ENCODE measurements at regions of chr19 and their contacts with region 1.

Region 1: DNA sequence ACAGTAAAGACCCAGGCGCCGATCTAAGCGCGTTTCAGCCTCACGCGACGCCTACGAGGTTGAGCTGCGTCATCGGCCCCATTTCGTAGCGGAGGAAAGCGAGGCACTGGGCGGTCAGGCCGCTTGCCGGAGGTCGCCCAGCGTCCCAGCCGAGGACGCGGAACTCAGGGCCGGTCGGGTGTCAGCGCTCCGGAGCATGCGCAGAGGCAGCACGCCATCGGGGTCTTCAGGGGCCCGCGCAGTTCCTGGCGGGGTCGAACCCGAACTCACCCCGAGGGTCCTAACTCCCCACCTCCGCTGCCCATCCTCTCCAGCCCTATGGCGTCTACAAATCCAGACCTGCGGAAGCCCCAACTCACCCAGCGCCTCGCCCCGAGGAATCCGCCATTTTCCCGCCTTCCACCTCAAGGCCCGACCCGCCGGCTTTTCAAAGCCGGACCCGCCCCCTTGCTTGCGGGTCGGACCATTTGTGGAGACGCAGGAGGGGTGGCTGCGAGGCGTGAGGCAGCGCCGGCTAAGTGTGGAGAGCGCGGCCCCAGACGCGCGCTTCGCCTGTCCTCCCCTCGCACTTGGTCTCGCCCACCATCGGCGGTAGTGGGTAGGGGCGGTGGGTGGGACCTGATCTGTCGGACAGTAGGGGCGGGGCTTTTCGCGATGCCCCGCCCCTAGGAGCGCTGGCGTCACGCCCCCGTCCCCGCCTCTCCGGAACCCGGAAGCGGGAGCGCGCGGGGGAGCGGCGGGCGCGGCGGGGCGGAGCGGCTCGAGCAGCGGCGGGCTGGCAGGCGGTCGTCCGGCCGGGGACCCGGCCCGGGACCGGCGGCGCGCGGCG is at the starts of genes HAUS8 and MYO9B:
- DNase-seq: peak; percentile 95
- ATAC-seq: peak; percentile 74
- H3K4me3 ChIP-seq: peak within 1 kb of the TSS; percentile 98
- H3K27ac ChIP-seq: peak within 1 kb of the TSS; percentile 87
- H3K4me1 ChIP-seq: peaks cover 29% of the 10 kb centered on the region
- H3K27me3 ChIP-seq: no peaks in the 10 kb centered on the region
- CTCF ChIP-seq: no peak
- EP300 ChIP-seq: 0 out of 4 replicates have a peak, but pooled peaks of 1 of the 2 experiments have one; percentile 17
- POLR2A ChIP-seq: peak; percentile 85
- RAD21 ChIP-seq: no peak
- polyA plus RNA-seq, gene HAUS8: 24.2 to 35.7 TPM
- polyA plus RNA-seq, gene MYO9B: 5.4 to 11.1 TPM

Region 2: DNA sequence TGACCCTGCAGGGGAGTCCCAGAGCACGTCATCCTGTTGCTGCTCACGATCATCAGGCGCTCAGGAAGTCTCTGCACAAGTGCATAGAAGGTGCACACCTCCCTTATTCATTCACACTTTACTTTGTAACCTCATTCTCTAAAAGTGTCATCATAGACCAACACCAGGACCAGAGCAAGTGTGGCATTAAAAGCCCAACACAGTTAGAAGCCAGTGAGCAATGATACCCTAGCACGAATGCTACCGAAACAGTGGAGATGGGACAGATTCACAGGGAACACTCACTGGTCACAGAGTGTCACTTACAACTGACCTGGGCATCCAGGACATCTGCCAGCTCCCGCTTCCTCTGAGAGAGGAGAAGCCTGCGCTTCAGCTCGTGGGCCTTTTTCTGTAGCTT is 17.0 kb before region 1 on chr19:
- CTCF ChIA-PET with region 1: no interaction called
- POLR2A ChIA-PET with region 1: no interaction called
- RAD21 ChIA-PET with region 1: no interaction called
- SMC1A ChIA-PET with region 1: no interaction called
- in situ Hi-C with region 1: no loop called
- intact Hi-C with region 1: no loop called
- DNase-seq: no peak
- ATAC-seq: no peak
- H3K4me3 ChIP-seq: no peak overlapping the region
- H3K27ac ChIP-seq: no peak overlapping the region
- H3K4me1 ChIP-seq: peaks cover 2% of the 10 kb centered on the region; the same call in 1 of the 2 replicates
- H3K27me3 ChIP-seq: no peaks in the 10 kb centered on the region
- CTCF ChIP-seq: no peak
- EP300 ChIP-seq: no peak
- POLR2A ChIP-seq: no peak
- RAD21 ChIP-seq: no peak

Region 3: GRCh38 chr19:17125715-17126677 is 50.7 kb after region 1 on chr19:
- CTCF ChIA-PET with region 1: interaction called, 30 read pairs
- POLR2A ChIA-PET with region 1: interaction called, 111 read pairs
- RAD21 ChIA-PET with region 1: interaction called, 91 read pairs
- SMC1A ChIA-PET with region 1: interaction called, 88 read pairs
- in situ Hi-C with region 1: no loop called
- intact Hi-C with region 1: loop called (anchors 1 kb)
- DNase-seq: peak; percentile 79
- ATAC-seq: peak; percentile 80
- H3K4me3 ChIP-seq: peak overlapping the region; percentile 61
- H3K27ac ChIP-seq: peak overlapping the region; percentile 97
- H3K4me1 ChIP-seq: peaks cover 48% of the 10 kb centered on the region
- H3K27me3 ChIP-seq: no peaks in the 10 kb centered on the region
- CTCF ChIP-seq: 0 out of 6 replicates have a peak, but pooled peaks of 1 of the 3 experiments have one; percentile 11
- EP300 ChIP-seq: peak; percentile 12 to 54; a peak in 1 of 4 replicates
- POLR2A ChIP-seq: peak; percentile 79
- RAD21 ChIP-seq: peak; percentile 23; the same call in 1 of the 2 replicates

Region 4: DNA sequence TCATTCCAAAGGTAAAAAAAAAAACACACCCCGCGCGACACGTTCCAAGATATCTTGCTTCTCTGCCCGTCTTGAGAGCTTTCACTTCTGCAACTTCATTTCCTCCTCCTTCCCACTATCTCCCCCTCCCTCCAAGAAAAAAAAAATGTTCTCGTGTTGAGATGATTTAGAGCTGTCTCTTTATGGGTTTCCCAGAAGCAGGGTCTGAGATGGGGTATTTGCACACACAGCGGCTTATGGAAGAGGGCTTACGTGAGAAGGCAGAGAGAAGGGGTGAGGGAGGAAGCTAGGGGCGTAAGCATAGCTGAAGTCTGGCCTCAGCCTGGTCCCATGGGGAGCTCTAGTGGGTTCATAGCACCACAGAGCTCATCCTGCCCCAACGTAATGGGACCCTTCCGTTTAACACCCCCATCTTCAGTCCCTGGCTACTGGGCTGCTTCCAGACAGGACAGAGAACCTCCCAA is 108.6 kb after region 1 on chr19:
- CTCF ChIA-PET with region 1: interaction called, 5 read pairs
- POLR2A ChIA-PET with region 1: interaction called, 4 read pairs
- RAD21 ChIA-PET with region 1: interaction called, 12 read pairs
- SMC1A ChIA-PET with region 1: interaction called, 3 read pairs
- in situ Hi-C with region 1: no loop called
- intact Hi-C with region 1: no loop called
- DNase-seq: peak; percentile 45
- ATAC-seq: peak; percentile 80
- H3K4me3 ChIP-seq: no peak overlapping the region
- H3K27ac ChIP-seq: peak overlapping the region; percentile 87
- H3K4me1 ChIP-seq: peaks cover 24% of the 10 kb centered on the region
- H3K27me3 ChIP-seq: no peaks in the 10 kb centered on the region
- CTCF ChIP-seq: no peak
- EP300 ChIP-seq: no peak; a peak in 1 of 4 replicates
- POLR2A ChIP-seq: no peak
- RAD21 ChIP-seq: 0 out of 2 replicates have a peak, but pooled peaks have one; percentile 17

Region 5: GRCh38 chr19:17266975-17267788 is 191.9 kb after region 1 on chr19 and contains the start of gene BABAM1:
- CTCF ChIA-PET with region 1: interaction called, 5 read pairs
- POLR2A ChIA-PET with region 1: interaction called, 3 read pairs
- RAD21 ChIA-PET with region 1: interaction called, 4 read pairs
- SMC1A ChIA-PET with region 1: interaction called, 7 read pairs
- in situ Hi-C with region 1: no loop called
- intact Hi-C with region 1: loop called (anchors 1 kb)
- DNase-seq: peak; percentile 100
- ATAC-seq: peak; percentile 97
- H3K4me3 ChIP-seq: peak within 1 kb of the TSS; percentile 93
- H3K27ac ChIP-seq: peak within 1 kb of the TSS; percentile 81
- H3K4me1 ChIP-seq: peaks cover 11% of the 10 kb centered on the region
- H3K27me3 ChIP-seq: no peaks in the 10 kb centered on the region
- CTCF ChIP-seq: no peak
- EP300 ChIP-seq: no peak
- POLR2A ChIP-seq: peak; percentile 84
- RAD21 ChIP-seq: no peak
- polyA plus RNA-seq, gene BABAM1: 11.9 to 37.4 TPM